Cardiac septum (tissue), 1 donor: ENCODE measurements at regions of chr18 and their contacts with region 1.

Region 1: GRCh38 chr18:44742704-44743311 is 62.1 kb downstream of the SETBP1 start:
- DNase-seq: no peak

Region 2: GRCh38 chr18:44693030-44693784 is 49.6 kb before region 1 on chr18:
- intact Hi-C with region 1: loop called (anchors 5 kb)
- DNase-seq: no peak